HepG2 (cell line): ENCODE measurements at regions of chr7 and their contacts with region 1.

Region 1: GRCh38 chr7:116138202-116138801 is 72.0 kb upstream of the TES start:
- DNase-seq: peak; percentile 52
- ATAC-seq: peak; percentile 90
- H3K4me3 ChIP-seq: no peak overlapping the region
- H3K27ac ChIP-seq: no peak overlapping the region
- H3K4me1 ChIP-seq: peaks cover 13% of the 10 kb centered on the region
- H3K27me3 ChIP-seq: 0 out of 5 replicates have a peak, but pooled peaks cover 2 to 3% of the 10 kb centered on the region in 2 experiments
- CTCF ChIP-seq: peak; percentile 81
- EP300 ChIP-seq: no peak
- POLR2A ChIP-seq: no peak
- RAD21 ChIP-seq: peak; percentile 43; the same call in 1 of the 2 replicates

Region 2: GRCh38 chr7:116173051-116174028 is 35.0 kb after region 1 on chr7:
- CTCF ChIA-PET with region 1: interaction called, 3 read pairs
- POLR2A ChIA-PET with region 1: no interaction called
- in situ Hi-C with region 1: no loop called
- intact Hi-C with region 1: loop called (anchors 5 kb)
- DNase-seq: peak; percentile 77
- ATAC-seq: peak; percentile 57
- H3K4me3 ChIP-seq: no peak overlapping the region
- H3K27ac ChIP-seq: no peak overlapping the region
- H3K4me1 ChIP-seq: peaks cover 48% of the 10 kb centered on the region
- H3K27me3 ChIP-seq: peaks cover 0 to 28% of the 10 kb centered on the region in 2 experiments; a peak in 4 of 5 replicates
- CTCF ChIP-seq: peak; percentile 67
- EP300 ChIP-seq: peak in 1 of 2 experiments; percentile 66; a peak in 2 of 4 replicates
- POLR2A ChIP-seq: no peak
- RAD21 ChIP-seq: no peak; the same call in 1 of the 2 replicates